Activated B cell treated with CpG ODN at 0.5 μM for 24 hours (primary cell): ENCODE measurements at regions of chr3 and their contacts with region 1.

Region 1: DNA sequence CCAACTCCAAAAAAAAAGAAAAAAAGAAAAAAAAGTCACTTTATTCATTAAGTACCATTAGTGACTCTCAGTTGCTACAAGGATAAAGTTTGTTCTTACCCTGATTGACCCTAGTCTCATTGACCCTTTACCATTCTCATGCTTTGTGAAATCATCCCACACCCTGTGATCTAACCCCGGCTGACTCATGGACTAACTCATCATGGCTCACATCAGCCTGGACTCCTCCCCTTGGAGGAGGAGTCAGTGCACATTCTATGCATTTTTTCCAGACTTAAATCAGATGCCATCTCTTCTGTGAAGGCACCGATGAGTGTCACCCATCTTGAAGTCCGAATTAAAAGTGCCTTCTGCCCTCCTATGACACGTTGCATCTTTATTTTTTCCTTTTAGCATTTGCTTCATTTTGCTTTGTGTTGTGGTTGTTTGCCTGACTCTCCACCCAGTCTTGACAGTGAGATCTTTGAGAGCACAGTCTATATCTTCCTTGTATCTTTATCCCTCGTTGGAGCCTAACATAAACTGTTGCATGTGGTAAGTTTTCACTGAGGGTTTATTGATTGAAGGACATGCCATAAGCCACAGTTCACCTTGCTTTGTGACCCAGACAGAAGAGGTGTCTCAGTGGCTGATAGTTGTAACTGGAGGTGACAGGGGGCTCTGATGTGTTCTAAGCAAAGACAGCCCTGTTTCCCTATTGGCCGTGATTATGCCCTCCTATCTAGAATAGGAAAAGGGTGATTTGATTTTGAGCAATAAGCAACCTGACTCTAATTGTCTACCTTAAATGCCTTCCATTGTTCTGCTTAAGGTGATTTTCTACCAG is 72.1 kb downstream of the IL1RAP start:
- DNase-seq: no peak
- ATAC-seq: peak; percentile 25
- H3K4me3 Mint-ChIP-seq: no peak overlapping the region
- H3K27ac Mint-ChIP-seq: no peak overlapping the region
- H3K4me1 Mint-ChIP-seq: peaks cover 25% of the 10 kb centered on the region
- H3K27me3 Mint-ChIP-seq: no peaks in the 10 kb centered on the region
- CTCF ChIP-seq: no peak

Region 2: DNA sequence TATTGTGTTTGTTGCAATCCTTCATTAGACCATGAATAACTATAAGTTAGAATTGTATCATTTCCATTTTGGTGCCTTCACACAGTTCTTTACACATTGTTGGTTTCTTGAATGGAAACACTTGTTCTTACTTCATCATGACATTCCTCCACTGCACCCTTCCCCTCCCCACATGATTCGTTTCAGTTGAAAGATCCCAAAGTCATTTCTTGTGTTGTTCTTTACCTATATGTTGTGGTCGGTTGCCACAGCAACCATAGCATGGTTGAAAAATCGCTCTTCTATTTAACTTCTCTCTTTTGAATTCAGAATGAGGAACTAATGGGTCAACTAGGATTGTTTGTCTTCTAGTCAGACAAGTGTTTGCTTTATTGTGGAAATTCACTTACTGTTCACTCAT is 31.2 kb after region 1 on chr3:
- CTCF ChIA-PET with region 1: no interaction called
- POLR2A ChIA-PET with region 1: no interaction called
- intact Hi-C with region 1: loop called (anchors 2 kb)
- DNase-seq: no peak
- ATAC-seq: peak; percentile 83
- H3K4me3 Mint-ChIP-seq: peak overlapping the region; percentile 13
- H3K27ac Mint-ChIP-seq: peak overlapping the region; percentile 68
- H3K4me1 Mint-ChIP-seq: peaks cover 36% of the 10 kb centered on the region
- H3K27me3 Mint-ChIP-seq: no peaks in the 10 kb centered on the region
- CTCF ChIP-seq: no peak